Naive thymus-derived CD4-positive, alpha-beta T cell (primary cell): ENCODE measurements at regions of chr6 and their contacts with region 1.

Region 1: GRCh38 chr6:130020907-130021629 is 2.7 kb downstream of the L3MBTL3 start:
- DNase-seq: peak; percentile 43 to 83 (median 78)
- ATAC-seq: peak; percentile 81
- H3K4me3 ChIP-seq: peak overlapping the region; percentile 62
- H3K4me3 Mint-ChIP-seq: peak overlapping the region; percentile 78 to 100 (median 98)
- H3K27ac ChIP-seq: peak overlapping the region; percentile 71
- H3K27ac Mint-ChIP-seq: peak overlapping the region; percentile 91 to 98 (median 96)
- H3K4me1 ChIP-seq: peaks cover 5 to 14% of the 10 kb centered on the region in 2 donors
- H3K4me1 Mint-ChIP-seq: peaks cover 21 to 56% (median 48%) of the 10 kb centered on the region in 7 donors
- H3K27me3 ChIP-seq: no peaks in the 10 kb centered on the region
- H3K27me3 Mint-ChIP-seq: peaks cover 0 to 19% (median 0%) of the 10 kb centered on the region in 5 donors

Region 2: GRCh38 chr6:129490521-129491245 is 530.4 kb before region 1 on chr6:
- CTCF ChIA-PET with region 1: no interaction called
- POLR2A ChIA-PET with region 1: no interaction called
- intact Hi-C with region 1: loop called (anchors 2 kb)
- DNase-seq: peak in 8 of 9 donors; percentile 53 to 89 (median 72)
- ATAC-seq: peak; percentile 96
- H3K4me3 ChIP-seq: peak overlapping the region; percentile 38
- H3K4me3 Mint-ChIP-seq: peak overlapping the region; percentile 61 to 90 (median 76)
- H3K27ac ChIP-seq: peak overlapping the region; percentile 73
- H3K27ac Mint-ChIP-seq: peak overlapping the region; percentile 84 to 97 (median 94)
- H3K4me1 ChIP-seq: peaks cover 15 to 21% of the 10 kb centered on the region in 2 donors
- H3K4me1 Mint-ChIP-seq: peaks cover 11 to 46% (median 32%) of the 10 kb centered on the region in 7 donors
- H3K27me3 ChIP-seq: no peaks in the 10 kb centered on the region
- H3K27me3 Mint-ChIP-seq: no peaks in the 10 kb centered on the region

Region 3: GRCh38 chr6:129621247-129621646 is 399.8 kb before region 1 on chr6:
- CTCF ChIA-PET with region 1: no interaction called
- POLR2A ChIA-PET with region 1: no interaction called
- intact Hi-C with region 1: loop called in 1 of 2 experiments (anchors 2 kb)
- DNase-seq: peak in 4 of 9 donors; percentile 8 to 27 (median 9)
- ATAC-seq: peak; percentile 48
- H3K4me3 ChIP-seq: no peak overlapping the region
- H3K4me3 Mint-ChIP-seq: no peak overlapping the region
- H3K27ac ChIP-seq: no peak overlapping the region
- H3K27ac Mint-ChIP-seq: no peak overlapping the region
- H3K4me1 ChIP-seq: no peaks in the 10 kb centered on the region
- H3K4me1 Mint-ChIP-seq: peaks cover 0 to 5% (median 0%) of the 10 kb centered on the region in 7 donors
- H3K27me3 ChIP-seq: no peaks in the 10 kb centered on the region
- H3K27me3 Mint-ChIP-seq: no peaks in the 10 kb centered on the region

Region 4: GRCh38 chr6:129748212-129748900 is 272.7 kb before region 1 on chr6:
- CTCF ChIA-PET with region 1: interaction called, 11 read pairs
- POLR2A ChIA-PET with region 1: interaction called, 11 read pairs
- intact Hi-C with region 1: loop called (anchors 1 kb)
- DNase-seq: peak in 8 of 9 donors; percentile 35 to 61 (median 42)
- ATAC-seq: peak; percentile 85
- H3K4me3 ChIP-seq: peak overlapping the region; percentile 43
- H3K4me3 Mint-ChIP-seq: peak overlapping the region; percentile 31 to 86 (median 79)
- H3K27ac ChIP-seq: peak overlapping the region; percentile 69
- H3K27ac Mint-ChIP-seq: peak overlapping the region; percentile 82 to 97 (median 89)
- H3K4me1 ChIP-seq: peaks cover 44 to 49% of the 10 kb centered on the region in 2 donors
- H3K4me1 Mint-ChIP-seq: peaks cover 40 to 81% (median 71%) of the 10 kb centered on the region in 7 donors
- H3K27me3 ChIP-seq: no peaks in the 10 kb centered on the region
- H3K27me3 Mint-ChIP-seq: no peaks in the 10 kb centered on the region

Region 5: DNA sequence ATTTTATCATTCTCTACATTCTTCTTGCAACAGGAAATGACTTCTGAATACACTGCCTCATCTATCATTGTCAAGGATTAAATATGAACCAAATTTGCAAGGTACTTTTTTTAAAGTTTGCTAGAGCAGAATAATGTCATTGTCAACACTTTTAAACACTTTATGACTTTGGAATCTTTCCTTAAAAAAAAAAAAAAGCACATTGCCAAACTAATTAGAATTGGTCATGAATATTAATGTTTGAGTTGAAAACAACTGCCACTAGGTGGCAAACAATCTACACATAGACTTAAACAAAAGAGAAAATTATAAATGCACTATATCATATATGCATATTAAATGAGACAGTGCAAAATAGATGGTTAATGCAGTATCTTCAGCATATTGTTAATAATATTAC is 127.4 kb before region 1 on chr6:
- CTCF ChIA-PET with region 1: interaction called, 3 read pairs
- POLR2A ChIA-PET with region 1: interaction called, 3 read pairs
- intact Hi-C with region 1: loop called (anchors 1 kb)
- DNase-seq: peak in 4 of 9 donors; percentile 2 to 13 (median 8)
- ATAC-seq: peak; percentile 54
- H3K4me3 ChIP-seq: no peak overlapping the region
- H3K4me3 Mint-ChIP-seq: no peak overlapping the region
- H3K27ac ChIP-seq: no peak overlapping the region
- H3K27ac Mint-ChIP-seq: no peak overlapping the region
- H3K4me1 ChIP-seq: no peaks in the 10 kb centered on the region
- H3K4me1 Mint-ChIP-seq: peaks cover 0 to 5% (median 0%) of the 10 kb centered on the region in 7 donors
- H3K27me3 ChIP-seq: no peaks in the 10 kb centered on the region
- H3K27me3 Mint-ChIP-seq: peaks cover 0 to 14% (median 5%) of the 10 kb centered on the region in 5 donors

Region 6: GRCh38 chr6:130009146-130009545 is 11.9 kb before region 1 on chr6:
- CTCF ChIA-PET with region 1: no interaction called
- POLR2A ChIA-PET with region 1: no interaction called
- intact Hi-C with region 1: no loop called
- DNase-seq: no peak
- ATAC-seq: no peak
- H3K4me3 ChIP-seq: no peak overlapping the region
- H3K4me3 Mint-ChIP-seq: no peak overlapping the region
- H3K27ac ChIP-seq: no peak overlapping the region
- H3K27ac Mint-ChIP-seq: no peak overlapping the region
- H3K4me1 ChIP-seq: no peaks in the 10 kb centered on the region
- H3K4me1 Mint-ChIP-seq: peaks cover 0 to 3% (median 0%) of the 10 kb centered on the region in 7 donors
- H3K27me3 ChIP-seq: no peaks in the 10 kb centered on the region
- H3K27me3 Mint-ChIP-seq: peaks cover 0 to 22% (median 5%) of the 10 kb centered on the region in 5 donors

Region 7: GRCh38 chr6:130138909-130139242 is 117.8 kb after region 1 on chr6:
- CTCF ChIA-PET with region 1: no interaction called
- POLR2A ChIA-PET with region 1: no interaction called
- intact Hi-C with region 1: no loop called
- DNase-seq: peak in 2 of 9 donors; percentile 19 to 31
- ATAC-seq: peak; percentile 39
- H3K4me3 ChIP-seq: peak overlapping the region; percentile 37
- H3K4me3 Mint-ChIP-seq: peak overlapping the region; percentile 69 to 98 (median 84)
- H3K27ac ChIP-seq: peak overlapping the region; percentile 70
- H3K27ac Mint-ChIP-seq: peak overlapping the region; percentile 88 to 97 (median 94)
- H3K4me1 ChIP-seq: peaks cover 33 to 49% of the 10 kb centered on the region in 2 donors
- H3K4me1 Mint-ChIP-seq: peaks cover 54 to 92% (median 80%) of the 10 kb centered on the region in 7 donors
- H3K27me3 ChIP-seq: no peaks in the 10 kb centered on the region
- H3K27me3 Mint-ChIP-seq: no peaks in the 10 kb centered on the region

Region 8: DNA sequence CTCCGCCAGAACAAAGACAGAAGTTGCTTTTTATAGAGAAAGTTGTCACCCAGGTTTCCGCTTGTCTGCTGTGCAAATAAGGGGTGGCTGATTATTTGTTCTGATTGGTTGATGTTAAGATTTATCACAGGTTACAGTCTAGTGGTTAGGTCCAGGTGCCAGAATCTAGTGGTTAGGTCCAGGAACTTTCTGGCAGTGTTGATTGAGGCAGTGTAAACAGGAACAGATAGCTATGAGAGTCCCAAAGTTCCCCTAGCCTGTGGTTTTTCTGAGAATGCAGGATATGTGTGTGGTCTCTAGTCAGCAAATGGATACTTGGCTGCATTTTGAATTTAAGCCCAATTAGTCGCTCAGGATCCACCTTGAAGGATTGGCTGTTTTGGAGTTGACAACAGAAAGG is 492.7 kb after region 1 on chr6:
- CTCF ChIA-PET with region 1: no interaction called
- POLR2A ChIA-PET with region 1: no interaction called
- intact Hi-C with region 1: loop called in 1 of 2 experiments (anchors 5 kb)
- DNase-seq: peak in 8 of 9 donors; percentile 50 to 87 (median 74)
- ATAC-seq: peak; percentile 94
- H3K4me3 ChIP-seq: no peak overlapping the region
- H3K4me3 Mint-ChIP-seq: peak overlapping the region in 9 of 10 donors; percentile 40 to 75 (median 64)
- H3K27ac ChIP-seq: peak overlapping the region; percentile 62
- H3K27ac Mint-ChIP-seq: peak overlapping the region; percentile 77 to 97 (median 87)
- H3K4me1 ChIP-seq: peaks cover 35 to 42% of the 10 kb centered on the region in 2 donors
- H3K4me1 Mint-ChIP-seq: peaks cover 17 to 80% (median 73%) of the 10 kb centered on the region in 7 donors
- H3K27me3 ChIP-seq: no peaks in the 10 kb centered on the region
- H3K27me3 Mint-ChIP-seq: peaks cover 0 to 4% (median 0%) of the 10 kb centered on the region in 5 donors